Activated CD4-positive, alpha-beta T cell treated with anti-CD3 and anti-CD28 coated beads for 36 hours (primary cell): ENCODE measurements at regions of chr17 and their contacts with region 1.

Region 1: DNA sequence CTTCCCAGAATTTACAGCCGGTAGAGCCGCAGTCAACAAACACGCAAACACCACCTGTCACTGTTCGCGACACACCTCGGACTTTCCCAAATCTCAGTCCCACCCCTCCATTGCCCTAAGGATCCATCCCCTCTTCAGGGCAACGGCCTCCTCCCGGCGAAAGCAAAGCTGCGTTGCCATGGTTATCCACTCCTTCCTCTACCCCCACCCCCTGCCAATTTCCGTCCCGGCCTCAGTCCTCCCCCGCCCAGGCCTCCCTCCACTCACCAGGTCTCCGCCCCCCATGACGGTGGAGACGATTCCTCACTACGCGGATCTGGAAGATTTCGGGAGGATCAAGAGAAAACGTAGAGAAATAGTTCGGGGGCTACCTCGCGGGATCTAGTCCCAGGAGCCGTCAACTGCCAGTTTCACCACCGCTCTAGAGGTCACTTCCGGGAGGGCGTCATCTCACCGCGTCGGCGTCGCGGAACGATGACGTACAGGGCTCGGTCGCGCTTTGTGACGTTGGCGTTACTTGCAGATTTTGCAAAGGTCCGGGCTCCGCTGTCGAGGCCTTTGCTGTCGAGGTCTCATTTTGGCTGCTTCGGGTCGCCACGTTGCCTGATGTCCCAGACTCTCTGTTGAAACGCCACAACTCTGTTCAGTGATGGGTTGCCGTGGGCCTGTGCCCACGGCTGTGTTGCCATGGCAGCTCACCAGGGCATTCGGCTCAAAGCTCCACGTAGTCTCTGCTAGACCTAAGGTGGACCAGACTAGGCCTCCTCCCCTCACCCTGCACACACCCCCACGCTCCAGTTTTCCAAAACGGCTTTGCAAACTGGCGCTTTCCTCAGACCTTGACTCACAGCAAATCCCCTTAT is at the start of gene CWC25:
- DNase-seq: peak; percentile 95
- ATAC-seq: peak; percentile 82
- H3K4me3 Mint-ChIP-seq: peak within 1 kb of the TSS; percentile 99
- H3K27ac Mint-ChIP-seq: peak within 1 kb of the TSS; percentile 99
- H3K4me1 Mint-ChIP-seq: peaks cover 27% of the 10 kb centered on the region
- H3K27me3 Mint-ChIP-seq: no peaks in the 10 kb centered on the region
- total RNA-seq, gene CWC25: 23.3 to 24.0 TPM

Region 2: GRCh38 chr17:38719943-38720641 is 105.0 kb before region 1 on chr17:
- CTCF ChIA-PET with region 1: no interaction called
- POLR2A ChIA-PET with region 1: no interaction called
- intact Hi-C with region 1: no loop called
- DNase-seq: peak; percentile 55
- ATAC-seq: peak; percentile 21
- H3K4me3 Mint-ChIP-seq: no peak overlapping the region
- H3K27ac Mint-ChIP-seq: no peak overlapping the region
- H3K4me1 Mint-ChIP-seq: peaks cover 43% of the 10 kb centered on the region
- H3K27me3 Mint-ChIP-seq: no peaks in the 10 kb centered on the region

Region 3: DNA sequence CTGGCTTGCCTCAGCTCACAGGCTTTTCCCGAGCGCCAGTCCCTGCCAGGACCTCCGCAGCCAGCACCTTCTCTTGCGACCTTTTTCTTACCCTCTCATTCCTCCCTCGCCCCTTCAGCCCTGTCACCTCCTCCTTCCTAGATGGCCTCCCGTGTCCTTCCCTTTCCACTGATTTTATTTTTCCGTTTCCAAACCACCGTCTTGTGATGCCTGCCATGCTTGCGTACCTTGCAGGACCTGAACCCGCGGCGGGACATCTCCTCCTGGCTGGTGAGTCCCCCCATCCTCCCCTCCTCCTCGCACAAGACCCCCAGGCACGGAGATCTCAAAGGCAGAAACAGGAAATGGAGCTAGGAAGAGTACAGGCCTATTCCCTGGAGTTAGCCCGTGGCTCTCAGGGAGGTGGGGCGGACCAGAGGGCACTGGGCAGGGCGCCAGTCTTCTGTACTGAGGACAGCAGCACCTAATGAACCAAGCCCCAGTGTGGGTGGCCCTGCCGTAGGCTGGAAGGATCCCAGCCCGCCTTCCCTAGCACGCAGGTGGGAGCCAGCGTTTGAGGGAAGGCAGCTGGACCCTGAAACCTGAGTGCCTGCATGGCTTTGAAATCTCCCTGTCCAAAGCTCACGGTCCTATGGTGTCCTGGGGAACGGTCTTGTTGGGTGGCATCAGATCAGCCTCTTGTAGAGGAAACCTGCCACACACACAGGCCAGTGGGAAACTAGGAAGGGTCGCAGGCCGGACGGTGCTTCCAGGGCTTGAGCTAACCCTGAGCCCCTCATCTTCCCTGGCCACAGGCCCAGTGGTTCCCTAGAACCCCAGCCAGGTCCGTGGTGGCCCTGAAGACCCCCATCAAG is 94.4 kb before region 1 on chr17:
- CTCF ChIA-PET with region 1: no interaction called
- POLR2A ChIA-PET with region 1: no interaction called
- intact Hi-C with region 1: no loop called
- DNase-seq: peak; percentile 51
- ATAC-seq: no peak
- H3K4me3 Mint-ChIP-seq: peak overlapping the region; percentile 91
- H3K27ac Mint-ChIP-seq: peak overlapping the region; percentile 93
- H3K4me1 Mint-ChIP-seq: peaks cover 79% of the 10 kb centered on the region
- H3K27me3 Mint-ChIP-seq: no peaks in the 10 kb centered on the region

Region 4: DNA sequence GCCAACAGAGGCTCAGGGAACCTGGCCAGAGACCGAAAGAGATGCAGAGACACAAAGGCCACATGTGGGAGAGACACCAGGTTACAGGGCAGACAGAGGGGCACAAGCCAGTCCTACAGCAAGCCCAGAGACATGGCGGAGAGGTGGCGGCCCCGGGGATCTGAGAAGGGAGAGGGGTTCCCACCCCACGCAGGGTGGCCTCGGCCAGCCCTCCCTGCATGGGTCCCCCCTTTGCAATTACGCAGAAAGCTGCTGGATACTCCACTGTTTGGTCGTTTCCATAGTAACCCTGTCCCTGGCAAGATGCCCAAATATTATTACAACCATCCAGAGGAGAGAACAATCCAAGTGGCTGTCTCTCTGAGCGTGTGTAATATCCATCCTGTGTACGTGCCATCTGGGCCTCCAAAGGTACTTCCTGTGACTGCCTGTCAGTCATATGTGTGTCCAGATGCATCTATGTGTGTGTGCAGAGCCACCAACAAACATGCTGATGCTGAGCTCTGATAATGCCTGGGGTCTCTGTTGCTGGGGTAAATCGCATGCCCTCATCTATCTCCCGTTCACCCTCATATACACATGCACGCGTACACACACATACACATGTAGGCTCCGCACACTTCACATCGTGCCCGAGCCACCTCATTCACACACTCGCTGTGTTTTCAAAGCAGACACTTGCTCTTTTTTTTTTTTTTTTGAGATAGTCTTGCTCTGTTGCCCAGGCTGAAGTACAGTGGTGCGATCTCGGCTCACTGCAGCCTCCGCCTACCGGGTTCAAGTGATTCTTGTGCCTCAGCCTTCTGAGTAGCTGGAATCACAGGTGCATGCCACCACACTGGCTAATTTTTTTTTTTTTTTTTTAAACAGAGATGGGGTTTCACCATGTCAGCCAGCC is 82.5 kb before region 1 on chr17:
- CTCF ChIA-PET with region 1: no interaction called
- POLR2A ChIA-PET with region 1: no interaction called
- intact Hi-C with region 1: no loop called
- DNase-seq: no peak
- ATAC-seq: peak; percentile 73
- H3K4me3 Mint-ChIP-seq: no peak overlapping the region
- H3K27ac Mint-ChIP-seq: no peak overlapping the region
- H3K4me1 Mint-ChIP-seq: peaks cover 9% of the 10 kb centered on the region
- H3K27me3 Mint-ChIP-seq: peaks cover 13% of the 10 kb centered on the region

Region 5: DNA sequence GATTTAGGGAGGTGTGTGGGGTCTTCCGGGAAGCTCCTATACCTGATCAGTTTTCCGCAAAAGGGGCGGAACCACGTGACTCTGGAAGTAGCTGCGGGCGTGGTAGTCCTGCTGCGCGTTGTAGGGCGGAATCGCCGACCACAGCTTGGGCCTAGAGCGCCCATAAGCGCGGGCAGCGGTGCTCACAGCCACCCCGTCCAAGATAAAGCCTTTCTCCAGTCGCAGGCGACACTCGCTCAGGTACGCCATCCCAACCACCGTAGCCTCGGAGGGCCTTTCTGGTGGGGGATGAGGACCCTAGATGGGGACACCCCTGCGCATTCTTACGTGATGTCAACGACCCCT is 16.0 kb after region 1 on chr17:
- CTCF ChIA-PET with region 1: no interaction called
- POLR2A ChIA-PET with region 1: no interaction called
- intact Hi-C with region 1: no loop called
- DNase-seq: peak; percentile 37
- ATAC-seq: peak; percentile 36
- H3K4me3 Mint-ChIP-seq: peak overlapping the region; percentile 57
- H3K27ac Mint-ChIP-seq: no peak overlapping the region
- H3K4me1 Mint-ChIP-seq: peaks cover 2% of the 10 kb centered on the region
- H3K27me3 Mint-ChIP-seq: no peaks in the 10 kb centered on the region

Region 6: DNA sequence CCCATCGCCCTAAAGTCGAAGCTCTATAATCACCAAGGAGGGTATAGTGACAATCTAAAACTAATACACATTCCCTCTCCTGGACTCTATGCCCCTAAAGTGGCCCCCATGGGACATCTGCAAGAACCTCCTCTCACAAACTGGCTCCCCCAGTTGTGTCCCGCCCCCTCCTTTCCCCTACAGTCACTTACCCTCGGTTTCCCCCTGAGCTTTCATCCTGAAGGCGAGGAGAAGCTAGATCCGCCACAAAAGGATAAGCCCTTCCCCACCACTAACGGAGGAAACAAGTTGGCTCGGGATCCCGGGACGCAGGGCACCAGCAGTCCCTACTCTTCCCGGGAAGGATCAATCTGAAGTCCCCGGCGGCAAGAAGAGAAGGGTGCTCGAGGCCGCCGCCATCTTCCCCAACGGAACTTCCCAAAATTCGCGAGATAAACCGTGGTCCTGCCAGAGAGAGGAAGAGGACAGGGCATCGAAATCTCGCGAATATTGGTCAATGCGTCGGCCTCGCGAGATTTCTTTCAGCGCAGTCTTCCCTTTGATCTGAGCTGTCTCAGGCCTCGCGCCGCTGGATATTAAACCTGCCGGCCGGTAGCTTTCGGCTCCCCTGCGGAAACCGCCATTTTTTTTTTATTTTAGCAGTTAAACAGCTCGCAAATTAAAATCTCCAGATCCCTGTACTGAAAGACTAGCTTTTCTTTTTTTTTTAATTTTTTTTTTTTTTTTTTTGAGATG is 625.9 kb after region 1 on chr17 and contains the start of gene MED1:
- CTCF ChIA-PET with region 1: no interaction called
- POLR2A ChIA-PET with region 1: no interaction called
- intact Hi-C with region 1: loop called in 1 of 2 experiments (anchors 1 kb)
- DNase-seq: peak; percentile 96
- ATAC-seq: peak; percentile 99
- H3K4me3 Mint-ChIP-seq: peak within 1 kb of the TSS; percentile 96
- H3K27ac Mint-ChIP-seq: peak within 1 kb of the TSS; percentile 96
- H3K4me1 Mint-ChIP-seq: peaks cover 30% of the 10 kb centered on the region
- H3K27me3 Mint-ChIP-seq: no peaks in the 10 kb centered on the region
- total RNA-seq, gene MED1: 66.1 to 76.1 TPM